Activated B cell treated with CpG ODN at 0.5 μM for 24 hours (primary cell): ENCODE measurements at regions of chr18 and their contacts with region 1.

Region 1: GRCh38 chr18:8988261-8988871 is 114.1 kb upstream of the NDUFV2 start:
- DNase-seq: peak; percentile 25
- ATAC-seq: peak; percentile 87
- H3K4me3 Mint-ChIP-seq: no peak overlapping the region
- H3K27ac Mint-ChIP-seq: no peak overlapping the region
- H3K4me1 Mint-ChIP-seq: no peaks in the 10 kb centered on the region
- H3K27me3 Mint-ChIP-seq: peaks cover 3% of the 10 kb centered on the region
- CTCF ChIP-seq: peak; percentile 19

Region 2: DNA sequence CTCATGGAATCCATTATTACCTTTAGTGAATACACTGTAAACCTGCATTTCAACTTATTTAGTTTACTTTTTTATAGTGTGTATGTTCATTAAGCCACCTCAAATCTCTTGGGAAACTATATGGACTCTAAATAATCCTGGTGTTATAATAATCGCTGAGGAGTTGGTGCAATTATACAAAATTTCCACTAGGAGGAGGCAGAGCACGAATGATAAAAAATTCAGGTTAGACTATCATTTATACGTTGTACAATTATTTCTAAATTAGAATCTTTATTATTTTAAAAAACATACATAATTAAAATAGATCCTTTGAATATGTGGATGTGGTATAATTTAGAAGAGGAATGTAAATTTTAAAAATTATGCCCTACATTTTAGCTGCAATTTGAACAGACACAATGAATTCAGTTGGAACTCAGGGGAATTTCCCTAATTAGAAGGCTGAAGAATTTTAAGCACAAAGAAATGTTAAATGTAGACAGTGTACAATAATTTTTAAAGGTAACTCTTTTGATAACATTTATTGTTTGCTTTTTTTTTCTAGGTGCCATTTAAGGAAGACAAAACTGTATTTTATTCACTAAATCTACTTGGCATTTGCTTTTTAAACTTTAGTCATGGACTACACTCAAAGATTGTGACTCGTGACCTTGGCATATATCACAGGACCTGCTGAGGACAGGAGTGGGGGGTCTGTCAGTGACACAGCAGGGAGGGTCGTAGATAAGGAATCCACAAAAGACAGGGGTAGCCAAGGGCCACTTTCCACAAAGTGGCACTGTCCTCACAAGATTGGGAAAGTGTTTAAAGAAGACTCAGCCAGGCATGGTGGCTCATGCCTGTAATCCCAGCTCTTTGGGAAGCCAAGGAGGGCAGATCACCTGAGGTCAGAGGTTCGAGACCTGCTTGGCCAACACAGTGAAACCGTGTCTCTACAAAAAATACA is 333.6 kb before region 1 on chr18:
- CTCF ChIA-PET with region 1: interaction called, 62 read pairs
- POLR2A ChIA-PET with region 1: interaction called, 6 read pairs
- intact Hi-C with region 1: loop called (anchors 1 kb)
- DNase-seq: no peak
- ATAC-seq: no peak
- H3K4me3 Mint-ChIP-seq: no peak overlapping the region
- H3K27ac Mint-ChIP-seq: no peak overlapping the region
- H3K4me1 Mint-ChIP-seq: peaks cover 6% of the 10 kb centered on the region
- H3K27me3 Mint-ChIP-seq: no peaks in the 10 kb centered on the region
- CTCF ChIP-seq: peak; percentile 67

Region 3: DNA sequence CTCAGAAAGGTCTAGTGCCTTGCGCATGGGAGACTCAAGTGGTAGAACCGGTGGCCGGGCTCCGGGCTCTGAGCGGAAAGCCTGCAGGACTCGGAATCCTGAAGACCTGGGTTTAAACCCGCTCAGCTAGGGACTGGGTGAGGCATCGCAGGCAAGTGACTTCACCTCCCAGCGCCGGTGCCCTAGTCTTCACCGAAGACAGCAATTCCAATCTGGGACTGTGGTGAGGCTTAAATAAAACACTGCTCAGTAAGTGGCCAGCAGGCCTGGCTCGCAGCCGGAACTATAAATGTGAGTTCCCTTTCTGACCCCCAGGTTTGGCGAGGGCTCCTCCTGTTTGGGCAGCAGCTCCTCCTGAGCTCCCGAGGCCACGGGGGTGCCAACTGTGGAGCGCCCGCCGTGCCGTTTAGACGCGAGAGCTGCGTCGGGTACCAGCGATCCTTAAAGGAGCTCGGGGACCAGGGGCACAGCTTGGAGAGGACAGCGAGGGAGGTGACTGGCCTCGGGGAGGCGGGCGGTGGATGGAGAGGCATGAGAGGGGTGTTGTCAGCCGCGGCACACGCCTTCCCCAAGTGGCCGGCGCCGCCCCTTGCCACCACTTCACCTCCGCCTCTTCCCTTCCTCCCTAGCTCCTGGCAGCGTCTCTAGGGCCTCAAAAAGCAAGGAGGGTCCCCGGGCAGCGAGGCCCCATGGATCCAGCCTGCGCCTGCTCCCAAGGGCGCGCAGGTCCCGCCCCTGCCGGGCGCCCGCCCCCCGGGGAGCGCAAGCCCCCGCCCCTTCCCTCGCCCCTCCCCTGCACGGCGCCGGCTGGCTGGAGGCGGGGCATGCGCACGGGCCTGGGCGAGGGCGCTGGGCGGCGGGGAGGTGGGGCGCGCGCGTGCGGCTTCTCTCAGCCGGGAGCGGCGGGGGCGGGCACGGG is 283.7 kb before region 1 on chr18:
- CTCF ChIA-PET with region 1: interaction called, 14 read pairs
- POLR2A ChIA-PET with region 1: no interaction called
- intact Hi-C with region 1: no loop called
- DNase-seq: peak; percentile 89
- ATAC-seq: peak; percentile 92
- H3K4me3 Mint-ChIP-seq: peak overlapping the region; percentile 89
- H3K27ac Mint-ChIP-seq: peak overlapping the region; percentile 41
- H3K4me1 Mint-ChIP-seq: peaks cover 26% of the 10 kb centered on the region
- H3K27me3 Mint-ChIP-seq: peaks cover 14% of the 10 kb centered on the region
- CTCF ChIP-seq: no peak

Region 4: GRCh38 chr18:9009703-9010488 is 21.5 kb after region 1 on chr18:
- CTCF ChIA-PET with region 1: interaction called, 4 read pairs
- POLR2A ChIA-PET with region 1: no interaction called
- intact Hi-C with region 1: loop called (anchors 2 kb)
- DNase-seq: no peak
- ATAC-seq: no peak
- H3K4me3 Mint-ChIP-seq: no peak overlapping the region
- H3K27ac Mint-ChIP-seq: no peak overlapping the region
- H3K4me1 Mint-ChIP-seq: no peaks in the 10 kb centered on the region
- H3K27me3 Mint-ChIP-seq: peaks cover 4% of the 10 kb centered on the region
- CTCF ChIP-seq: no peak